Adrenal gland (tissue), 19 donors: ENCODE measurements at regions of chr12 and their contacts with region 1.

Region 1: GRCh38 chr12:2754208-2754607 is 40.6 kb upstream of the FKBP4 start:
- DNase-seq: no peak
- H3K4me3 ChIP-seq: no peak overlapping the region
- H3K27ac ChIP-seq: no peak overlapping the region
- H3K4me1 ChIP-seq: no peaks in the 10 kb centered on the region
- H3K27me3 ChIP-seq: no peaks in the 10 kb centered on the region
- CTCF ChIP-seq: no peak
- POLR2A ChIP-seq: no peak

Region 2: DNA sequence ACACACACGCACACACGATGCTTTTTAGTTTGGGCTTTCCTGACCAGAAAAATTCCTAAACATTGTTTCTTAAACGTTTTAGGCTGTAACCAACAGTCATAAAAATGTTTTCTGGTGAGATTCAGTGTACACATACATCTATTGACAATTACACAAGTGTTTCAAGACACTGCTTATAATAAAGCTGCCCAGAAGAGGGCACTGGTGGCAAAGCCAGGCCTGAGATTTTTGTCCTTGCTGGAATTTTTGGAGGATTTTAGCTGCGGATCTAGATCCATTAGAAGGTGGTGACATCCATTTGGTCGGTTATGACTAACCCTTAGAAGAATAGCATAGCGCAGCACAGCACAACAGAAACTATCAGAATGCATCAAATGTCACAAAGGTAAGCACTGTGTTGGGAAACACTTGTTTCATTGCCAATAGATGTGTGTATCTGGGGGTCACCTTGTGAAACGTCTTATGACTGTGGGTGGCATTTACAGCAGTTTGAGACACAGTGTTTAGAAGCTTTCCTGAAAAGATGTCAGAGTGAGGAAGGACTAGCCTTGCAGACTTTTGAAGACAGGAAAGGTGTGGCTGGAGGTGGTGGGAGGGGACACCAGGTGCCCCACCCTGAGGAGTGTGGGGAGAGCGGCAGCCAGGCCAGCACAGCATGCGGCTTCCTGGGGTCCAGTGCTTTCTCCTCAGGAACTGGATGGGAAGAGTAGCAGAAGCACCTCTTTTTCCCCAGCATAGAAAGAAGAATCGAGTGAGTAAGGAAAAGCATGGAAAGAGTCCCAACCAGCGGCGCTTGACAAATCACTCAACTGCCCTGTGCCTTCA is 14.2 kb before region 1 on chr12:
- intact Hi-C with region 1: loop called in 1 of 2 experiments (anchors 2 kb)
- DNase-seq: peak in 4 of 7 donors; percentile 23 to 49 (median 28)
- H3K4me3 ChIP-seq: no peak overlapping the region
- H3K27ac ChIP-seq: no peak overlapping the region
- H3K4me1 ChIP-seq: no peaks in the 10 kb centered on the region
- H3K27me3 ChIP-seq: no peaks in the 10 kb centered on the region
- CTCF ChIP-seq: peak; percentile 26 to 62 (median 56)
- POLR2A ChIP-seq: no peak

Region 3: DNA sequence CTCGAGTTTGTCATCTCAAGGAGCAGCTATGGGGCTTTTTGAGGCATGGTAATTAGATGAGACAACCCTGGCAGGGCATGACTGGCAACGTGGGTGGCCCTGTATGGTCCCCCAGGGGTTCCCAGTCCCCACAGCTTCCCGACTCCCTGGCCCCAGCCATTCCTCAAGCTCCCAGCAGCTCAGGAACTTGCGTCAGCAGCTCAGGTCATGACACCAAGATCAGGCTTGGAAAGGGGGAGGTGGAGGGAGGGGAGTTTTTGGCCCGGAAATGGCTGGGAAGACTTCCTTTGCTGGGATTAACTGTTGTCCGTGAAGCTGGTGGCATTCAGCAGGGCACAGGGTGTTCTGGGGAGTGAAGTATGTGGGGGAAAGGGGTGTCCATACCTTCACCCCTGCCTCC is 91.1 kb after region 1 on chr12:
- intact Hi-C with region 1: no loop called
- DNase-seq: peak in 6 of 7 donors; percentile 35 to 74 (median 57)
- H3K4me3 ChIP-seq: no peak overlapping the region
- H3K27ac ChIP-seq: peak overlapping the region in 3 of 5 donors; percentile 21 to 79 (median 68)
- H3K4me1 ChIP-seq: no peaks in the 10 kb centered on the region
- H3K27me3 ChIP-seq: no peaks in the 10 kb centered on the region
- CTCF ChIP-seq: no peak
- POLR2A ChIP-seq: no peak